CD14-positive monocyte (primary cell): ENCODE measurements at regions of chr1 and their contacts with region 1.

Region 1: DNA sequence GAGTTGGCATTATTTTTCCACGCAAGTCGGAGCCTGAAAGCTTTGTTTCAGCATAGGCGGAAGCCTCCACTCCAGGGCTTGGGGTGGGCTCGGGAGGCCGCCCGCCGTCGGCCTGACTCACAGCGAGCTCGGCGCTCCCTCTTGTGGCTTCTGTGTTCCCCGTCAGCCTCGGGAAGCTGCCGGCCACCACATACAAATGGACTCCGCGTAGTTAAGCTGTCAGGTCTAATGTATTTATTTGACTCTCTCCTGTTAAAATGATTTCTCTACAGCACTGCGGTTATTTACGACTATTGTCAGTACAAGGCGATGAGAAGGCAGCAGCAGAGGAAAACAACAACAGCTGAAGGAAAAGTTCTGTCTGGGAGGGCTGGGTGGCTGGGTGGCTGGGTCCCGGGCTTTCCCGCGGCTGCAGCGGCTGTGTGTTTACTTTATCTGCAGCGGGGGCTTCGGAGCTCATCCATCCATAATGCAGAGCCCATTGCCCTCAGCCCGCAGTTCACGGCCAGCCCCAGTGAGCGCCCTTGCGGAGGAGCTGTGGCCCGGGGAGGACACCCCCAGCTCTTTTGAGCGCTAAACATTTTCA is 375.7 kb upstream of the CAMK1G start:
- DNase-seq: no peak
- H3K4me3 ChIP-seq: no peak overlapping the region
- H3K4me3 Mint-ChIP-seq: peak overlapping the region in 1 of 2 donors; percentile 82
- H3K27ac ChIP-seq: no peak overlapping the region
- H3K27ac Mint-ChIP-seq: no peak overlapping the region
- H3K4me1 ChIP-seq: peaks cover 0 to 7% of the 10 kb centered on the region in 2 donors
- H3K4me1 Mint-ChIP-seq: peaks cover 12% of the 10 kb centered on the region
- H3K27me3 ChIP-seq: peaks cover 14 to 31% of the 10 kb centered on the region in 2 donors
- H3K27me3 Mint-ChIP-seq: peaks cover 24 to 48% (median 37%) of the 10 kb centered on the region in 3 donors
- CTCF ChIP-seq: peak; percentile 32

Region 2: GRCh38 chr1:209435654-209436566 is 228.1 kb after region 1 on chr1:
- intact Hi-C with region 1: loop called in 1 of 2 experiments (anchors 10 kb)
- DNase-seq: peak; percentile 36 to 57 (median 54)
- H3K4me3 ChIP-seq: no peak overlapping the region
- H3K4me3 Mint-ChIP-seq: no peak overlapping the region
- H3K27ac ChIP-seq: no peak overlapping the region
- H3K27ac Mint-ChIP-seq: peak overlapping the region in 1 of 7 donors; percentile 61
- H3K4me1 ChIP-seq: no peaks in the 10 kb centered on the region
- H3K4me1 Mint-ChIP-seq: peaks cover 4% of the 10 kb centered on the region
- H3K27me3 ChIP-seq: no peaks in the 10 kb centered on the region
- H3K27me3 Mint-ChIP-seq: peaks cover 2 to 6% (median 3%) of the 10 kb centered on the region in 3 donors
- CTCF ChIP-seq: peak; percentile 93

Region 3: GRCh38 chr1:209513226-209513625 is 305.4 kb after region 1 on chr1:
- intact Hi-C with region 1: loop called in 1 of 2 experiments (anchors 5 kb)
- DNase-seq: peak in 2 of 3 donors; percentile 6 to 13
- H3K4me3 ChIP-seq: no peak overlapping the region
- H3K4me3 Mint-ChIP-seq: no peak overlapping the region
- H3K27ac ChIP-seq: no peak overlapping the region
- H3K27ac Mint-ChIP-seq: no peak overlapping the region
- H3K4me1 ChIP-seq: no peaks in the 10 kb centered on the region
- H3K4me1 Mint-ChIP-seq: no peaks in the 10 kb centered on the region
- H3K27me3 ChIP-seq: no peaks in the 10 kb centered on the region
- H3K27me3 Mint-ChIP-seq: peaks cover 1 to 5% (median 1%) of the 10 kb centered on the region in 3 donors
- CTCF ChIP-seq: peak; percentile 67